PC-3 (cell line): ENCODE measurements at regions of chr1 and their contacts with region 1.

Region 1: GRCh38 chr1:115062542-115063011 is 26.7 kb downstream of the TSPAN2 start:
- DNase-seq: peak; percentile 93
- ATAC-seq: peak; percentile 79
- H3K4me3 ChIP-seq: peak overlapping the region; percentile 27; the same call in 1 of the 2 replicates
- H3K27ac ChIP-seq: peak overlapping the region; percentile 87
- H3K4me1 ChIP-seq: peaks cover 43% of the 10 kb centered on the region
- H3K27me3 ChIP-seq: no peaks in the 10 kb centered on the region
- CTCF ChIP-seq: no peak

Region 2: DNA sequence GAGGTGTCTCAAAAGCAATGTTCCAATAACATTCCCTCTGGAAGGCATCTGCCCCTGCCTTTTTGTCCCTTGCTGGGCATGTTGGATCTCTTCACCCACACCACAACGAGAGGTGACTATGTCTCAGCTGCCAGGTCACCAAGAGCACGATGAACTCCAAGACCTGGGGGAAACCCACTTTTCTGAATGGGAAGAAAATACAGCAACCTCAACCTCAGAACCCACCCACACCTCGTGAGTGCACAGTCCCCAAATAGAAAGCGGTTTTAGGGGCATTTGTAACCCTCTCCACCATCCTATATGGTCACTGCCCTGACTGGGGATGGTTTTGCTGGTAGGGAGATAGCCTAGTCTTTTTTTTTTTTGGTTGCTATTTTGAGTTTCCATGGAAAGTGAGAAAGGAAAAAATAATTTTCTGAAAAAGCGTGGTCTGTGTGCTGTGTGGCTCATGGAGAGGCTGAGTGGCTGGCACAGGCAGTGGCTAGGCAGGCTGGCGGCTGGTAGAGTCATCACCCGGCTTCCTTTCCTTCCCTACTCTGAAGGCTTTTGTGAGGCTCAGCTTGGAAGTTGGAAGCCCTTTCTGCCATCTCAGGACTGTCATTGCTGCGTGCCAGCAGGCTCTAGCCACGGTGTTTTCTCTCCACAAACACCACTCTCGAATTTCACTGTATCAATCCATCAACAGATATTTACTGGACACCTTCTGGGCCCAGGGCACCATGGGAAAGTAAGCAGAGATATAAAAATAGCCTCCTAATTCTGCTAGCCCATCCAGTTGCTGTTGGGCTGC is 10.9 kb after region 1 on chr1:
- CTCF ChIA-PET with region 1: no interaction called
- POLR2A ChIA-PET with region 1: no interaction called
- intact Hi-C with region 1: no loop called
- DNase-seq: no peak
- ATAC-seq: no peak
- H3K4me3 ChIP-seq: no peak overlapping the region
- H3K27ac ChIP-seq: no peak overlapping the region
- H3K4me1 ChIP-seq: peaks cover 10% of the 10 kb centered on the region
- H3K27me3 ChIP-seq: no peaks in the 10 kb centered on the region
- CTCF ChIP-seq: no peak

Region 3: DNA sequence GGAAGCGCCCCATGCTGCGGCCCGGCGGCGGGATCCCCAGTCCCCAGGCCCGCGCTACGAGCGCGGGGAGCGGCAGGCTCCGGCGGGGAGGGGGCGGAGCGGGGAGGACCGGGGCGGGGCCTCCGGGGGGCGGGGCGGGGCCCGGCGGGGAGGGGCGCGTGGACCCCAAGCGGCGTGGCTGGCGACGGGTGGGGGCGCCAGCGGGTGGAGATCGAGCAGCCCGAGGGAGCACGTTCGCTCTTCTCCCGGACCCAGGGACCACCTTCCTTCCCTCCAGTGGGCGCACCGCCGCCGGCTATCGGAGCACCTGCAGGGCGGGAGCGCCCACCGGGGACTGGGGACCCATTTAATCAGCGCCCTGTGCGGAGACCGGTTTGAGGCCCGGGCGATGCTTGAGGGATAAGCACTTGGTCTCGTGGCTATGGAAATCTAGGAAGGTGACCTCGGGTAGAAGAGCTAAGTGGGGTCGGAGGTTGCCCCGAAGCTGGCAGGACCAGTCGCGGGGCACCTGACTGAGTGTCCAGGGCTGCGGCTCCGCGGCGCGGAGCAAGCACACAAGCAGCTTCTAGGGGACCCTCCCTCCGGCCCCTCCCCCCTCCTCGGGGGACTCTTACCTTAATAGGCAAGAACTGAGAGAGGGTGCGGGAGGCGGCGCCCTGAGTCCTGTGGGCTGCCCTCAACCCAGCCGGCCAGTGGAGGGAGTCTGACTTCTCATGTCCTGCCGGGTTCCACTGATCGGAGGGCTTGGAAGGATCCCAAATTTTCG is 27.0 kb after region 1 on chr1 and contains the start of gene TSPAN2:
- CTCF ChIA-PET with region 1: no interaction called
- POLR2A ChIA-PET with region 1: no interaction called
- intact Hi-C with region 1: loop called (anchors 2 kb)
- DNase-seq: peak; percentile 61
- ATAC-seq: peak; percentile 88
- H3K4me3 ChIP-seq: peak within 1 kb of the TSS; percentile 96
- H3K27ac ChIP-seq: no peak within 1 kb of the TSS
- H3K4me1 ChIP-seq: peaks cover 5% of the 10 kb centered on the region; the same call in 1 of the 2 replicates
- H3K27me3 ChIP-seq: no peaks in the 10 kb centered on the region
- CTCF ChIP-seq: peak; percentile 55
- total RNA-seq, gene TSPAN2: 1.3 and 1.7 TPM in 2 replicates